Activated CD4-positive, alpha-beta T cell treated with anti-CD3 and anti-CD28 coated beads for 36 hours (primary cell): ENCODE measurements at regions of chr14 and their contacts with region 1.

Region 1: DNA sequence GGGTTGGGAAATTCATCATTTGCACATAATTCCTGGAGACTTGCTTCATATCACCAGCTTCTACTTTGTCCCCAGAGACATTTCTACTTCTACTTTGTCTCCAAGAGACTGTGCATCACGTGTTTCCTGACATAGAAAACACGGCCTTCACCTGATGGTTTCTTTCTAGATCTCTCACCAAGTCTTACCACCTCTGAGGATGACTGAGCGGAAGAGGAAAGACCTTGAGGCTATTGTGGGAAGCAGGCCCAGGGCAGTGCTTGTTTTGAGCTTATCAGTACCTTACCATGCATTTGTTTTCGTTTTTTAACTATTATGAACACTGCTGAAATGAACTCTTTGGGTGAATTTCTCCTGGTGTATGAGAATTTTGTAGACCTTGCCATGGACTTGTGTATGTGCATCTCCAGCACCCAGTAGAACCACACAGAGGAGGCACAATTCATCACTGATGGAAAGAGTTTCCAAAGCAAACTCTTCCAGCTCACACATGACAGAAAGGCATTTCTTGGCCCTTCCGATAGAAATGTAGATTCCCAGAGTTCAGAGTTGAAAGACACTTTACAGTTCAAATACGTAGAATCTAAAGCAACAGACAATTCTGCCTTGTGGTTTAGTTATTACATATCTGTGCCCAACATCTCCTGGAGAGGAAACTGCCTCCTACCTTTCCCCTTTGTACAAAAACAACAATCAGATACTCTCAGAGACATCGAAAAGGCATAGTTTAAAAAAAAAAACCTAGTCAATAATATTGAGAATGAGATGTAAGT is 434.7 kb downstream of the FUT8 start:
- DNase-seq: peak; percentile 80
- ATAC-seq: peak; percentile 82
- H3K4me3 Mint-ChIP-seq: peak overlapping the region; percentile 45
- H3K27ac Mint-ChIP-seq: peak overlapping the region; percentile 72
- H3K4me1 Mint-ChIP-seq: peaks cover 66% of the 10 kb centered on the region
- H3K27me3 Mint-ChIP-seq: no peaks in the 10 kb centered on the region

Region 2: GRCh38 chr14:65495196-65495595 is 352.1 kb before region 1 on chr14:
- CTCF ChIA-PET with region 1: no interaction called
- POLR2A ChIA-PET with region 1: no interaction called
- intact Hi-C with region 1: no loop called
- DNase-seq: no peak
- ATAC-seq: no peak
- H3K4me3 Mint-ChIP-seq: no peak overlapping the region
- H3K27ac Mint-ChIP-seq: no peak overlapping the region
- H3K4me1 Mint-ChIP-seq: peaks cover 26% of the 10 kb centered on the region
- H3K27me3 Mint-ChIP-seq: no peaks in the 10 kb centered on the region

Region 3: DNA sequence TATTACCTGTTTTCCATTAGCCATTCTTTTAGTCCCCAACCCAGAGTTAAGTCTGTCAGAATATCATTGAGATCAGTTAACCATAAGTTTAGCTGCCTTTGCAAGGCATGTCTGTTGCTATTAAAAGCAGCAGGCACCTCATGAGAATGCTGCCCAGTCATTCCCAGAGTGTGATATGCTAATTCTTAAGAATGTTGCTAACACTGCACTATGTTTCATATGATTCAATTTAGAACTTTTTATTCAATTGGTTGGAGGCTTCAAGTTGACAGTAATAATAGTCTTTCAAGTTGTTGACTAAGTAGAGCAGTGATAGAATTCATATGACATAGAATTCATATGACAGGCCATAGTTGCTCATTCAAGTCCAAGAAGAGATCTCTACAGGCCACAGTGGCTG is 142.4 kb before region 1 on chr14:
- CTCF ChIA-PET with region 1: no interaction called
- POLR2A ChIA-PET with region 1: no interaction called
- intact Hi-C with region 1: loop called in 1 of 2 experiments (anchors 2 kb)
- DNase-seq: peak; percentile 67
- ATAC-seq: peak; percentile 96
- H3K4me3 Mint-ChIP-seq: no peak overlapping the region
- H3K27ac Mint-ChIP-seq: peak overlapping the region; percentile 84
- H3K4me1 Mint-ChIP-seq: peaks cover 20% of the 10 kb centered on the region
- H3K27me3 Mint-ChIP-seq: no peaks in the 10 kb centered on the region

Region 4: DNA sequence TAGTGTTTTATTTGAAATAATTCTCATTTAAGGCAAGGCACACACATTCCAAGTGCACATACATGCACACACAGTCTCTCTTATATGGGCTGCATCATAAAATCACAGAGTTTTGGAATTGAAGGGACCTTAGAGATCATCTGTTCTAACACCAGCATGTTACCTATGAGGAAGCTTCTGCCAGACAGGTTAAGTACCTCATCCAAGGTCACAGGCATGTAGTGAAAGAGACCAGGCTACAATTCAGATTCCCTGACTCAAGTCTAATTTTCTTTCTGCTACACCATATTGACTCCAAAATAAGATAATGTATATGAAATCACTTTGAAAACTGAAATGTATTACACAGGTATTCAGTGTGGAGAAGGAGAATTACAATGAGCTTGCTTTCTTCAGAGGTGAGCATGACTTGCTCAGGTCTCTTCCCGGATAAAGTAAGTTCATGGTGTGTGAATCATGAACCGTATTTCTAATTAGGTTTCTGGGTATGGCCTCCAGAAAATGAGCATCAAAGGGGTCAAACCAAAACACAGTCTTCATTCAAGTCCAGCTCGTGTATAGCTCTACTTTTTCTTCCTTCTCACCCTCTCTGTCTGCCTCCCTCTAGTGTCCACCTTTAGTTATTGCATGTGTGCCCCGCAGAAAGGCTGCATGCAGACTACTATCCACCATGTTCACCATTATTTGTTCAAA is 22.8 kb before region 1 on chr14:
- CTCF ChIA-PET with region 1: interaction called, 20 read pairs
- POLR2A ChIA-PET with region 1: no interaction called
- intact Hi-C with region 1: no loop called
- DNase-seq: peak; percentile 70
- ATAC-seq: peak; percentile 80
- H3K4me3 Mint-ChIP-seq: no peak overlapping the region
- H3K27ac Mint-ChIP-seq: no peak overlapping the region
- H3K4me1 Mint-ChIP-seq: peaks cover 7% of the 10 kb centered on the region
- H3K27me3 Mint-ChIP-seq: no peaks in the 10 kb centered on the region

Region 5: DNA sequence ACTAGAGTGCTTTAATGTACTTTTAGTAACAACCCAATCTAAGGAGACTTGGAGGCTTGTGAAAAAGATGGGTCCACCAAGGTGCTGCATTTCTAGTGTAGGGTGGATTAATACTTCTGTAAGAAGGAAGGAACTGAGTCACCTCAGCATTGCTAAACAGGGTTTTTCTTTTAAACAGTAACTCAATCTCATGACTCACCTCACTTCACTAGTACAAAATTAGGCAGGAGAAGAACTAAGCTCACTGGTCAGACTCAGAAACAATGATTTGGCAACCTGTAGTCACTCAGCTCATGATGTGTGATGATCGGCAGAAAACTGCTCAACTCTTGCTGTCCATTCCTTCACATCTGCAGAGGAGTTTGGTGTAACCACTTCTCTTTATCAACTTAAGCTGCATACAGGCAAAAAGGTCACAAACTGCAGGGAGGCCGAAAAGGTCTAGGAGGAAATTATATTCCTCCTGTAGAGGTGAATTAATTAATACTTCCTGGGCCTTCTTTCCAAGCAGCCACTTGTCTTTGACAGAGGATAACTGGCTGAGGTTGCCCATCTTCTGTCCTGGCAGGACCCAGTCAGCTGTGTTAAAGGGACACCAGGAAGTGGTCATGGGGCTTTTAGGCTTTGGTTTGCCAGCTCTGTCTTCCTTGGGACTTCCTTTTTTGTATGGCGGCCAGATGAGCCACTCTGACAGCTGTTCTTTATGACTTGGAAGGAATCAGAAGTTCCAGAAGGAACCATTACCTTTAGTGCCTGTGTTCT is 32.2 kb after region 1 on chr14:
- CTCF ChIA-PET with region 1: no interaction called
- POLR2A ChIA-PET with region 1: interaction called, 4 read pairs
- intact Hi-C with region 1: loop called in 1 of 2 experiments (anchors 2 kb)
- DNase-seq: peak; percentile 18
- ATAC-seq: peak; percentile 94
- H3K4me3 Mint-ChIP-seq: no peak overlapping the region
- H3K27ac Mint-ChIP-seq: peak overlapping the region; percentile 61
- H3K4me1 Mint-ChIP-seq: peaks cover 22% of the 10 kb centered on the region
- H3K27me3 Mint-ChIP-seq: no peaks in the 10 kb centered on the region

Region 6: GRCh38 chr14:65949711-65950516 is 102.7 kb after region 1 on chr14:
- CTCF ChIA-PET with region 1: interaction called, 3 read pairs
- POLR2A ChIA-PET with region 1: no interaction called
- intact Hi-C with region 1: loop called (anchors 2 kb)
- DNase-seq: peak; percentile 77
- ATAC-seq: peak; percentile 92
- H3K4me3 Mint-ChIP-seq: no peak overlapping the region
- H3K27ac Mint-ChIP-seq: peak overlapping the region; percentile 63
- H3K4me1 Mint-ChIP-seq: peaks cover 35% of the 10 kb centered on the region
- H3K27me3 Mint-ChIP-seq: peaks cover 12% of the 10 kb centered on the region